B cell (primary cell): ENCODE measurements at regions of chr17 and their contacts with region 1.

Region 1: GRCh38 chr17:32142038-32142856 is at the start of gene RHOT1:
- DNase-seq: peak; percentile 89
- ATAC-seq: peak; percentile 84
- H3K4me3 ChIP-seq: peak within 1 kb of the TSS; percentile 68 to 97 (median 78)
- H3K4me3 Mint-ChIP-seq: peak within 1 kb of the TSS; percentile 96
- H3K27ac ChIP-seq: peak within 1 kb of the TSS; percentile 58 to 77
- H3K27ac Mint-ChIP-seq: peak within 1 kb of the TSS; percentile 88
- H3K4me1 ChIP-seq: peaks cover 17 to 34% of the 10 kb centered on the region in 2 donors
- H3K4me1 Mint-ChIP-seq: peaks cover 27% of the 10 kb centered on the region
- H3K27me3 ChIP-seq: no peaks in the 10 kb centered on the region
- H3K27me3 Mint-ChIP-seq: no peaks in the 10 kb centered on the region
- CTCF ChIP-seq: peak; percentile 56
- total RNA-seq, gene RHOT1: 24.6 and 27.9 TPM in 2 replicates

Region 2: DNA sequence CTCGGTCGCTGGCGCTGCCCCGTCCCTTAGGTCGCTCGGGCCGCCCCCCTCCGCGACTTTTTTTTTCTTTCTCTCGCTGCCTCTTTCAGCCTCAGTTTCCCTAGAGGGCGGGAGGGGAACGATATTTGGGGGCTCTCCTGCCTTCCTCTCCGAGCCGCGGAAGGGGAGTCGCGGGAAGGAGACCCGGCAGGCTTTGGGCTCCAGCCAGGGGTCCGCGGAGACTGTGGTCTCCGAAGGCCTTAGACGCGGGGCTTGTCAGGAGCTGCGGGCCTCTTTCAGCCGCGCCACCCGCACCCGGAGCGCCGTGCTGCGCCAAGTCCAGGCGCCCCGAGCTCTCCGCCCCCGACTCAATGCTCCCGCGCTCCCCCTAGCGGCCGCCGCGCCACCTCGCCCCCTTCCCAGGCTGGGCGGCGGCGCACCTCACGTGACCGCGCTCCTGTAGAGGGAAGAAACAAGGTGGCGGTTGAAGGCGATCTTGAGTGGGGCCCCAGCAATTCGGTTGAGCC is 135.2 kb before region 1 on chr17 and contains the start of gene LRRC37B:
- CTCF ChIA-PET with region 1: interaction called, 41 read pairs
- POLR2A ChIA-PET with region 1: interaction called, 5 read pairs
- intact Hi-C with region 1: loop called (anchors 1 kb)
- DNase-seq: peak; percentile 91
- ATAC-seq: peak; percentile 94
- H3K4me3 ChIP-seq: peak within 1 kb of the TSS; percentile 66 to 88 (median 78)
- H3K4me3 Mint-ChIP-seq: peak within 1 kb of the TSS; percentile 88
- H3K27ac ChIP-seq: peak within 1 kb of the TSS; percentile 6 to 59
- H3K27ac Mint-ChIP-seq: peak within 1 kb of the TSS; percentile 86
- H3K4me1 ChIP-seq: peaks cover 10 to 14% of the 10 kb centered on the region in 2 donors
- H3K4me1 Mint-ChIP-seq: peaks cover 34% of the 10 kb centered on the region
- H3K27me3 ChIP-seq: no peaks in the 10 kb centered on the region
- H3K27me3 Mint-ChIP-seq: no peaks in the 10 kb centered on the region
- CTCF ChIP-seq: peak; percentile 87
- total RNA-seq, gene LRRC37B: 40.6 and 46.7 TPM in 2 replicates

Region 3: GRCh38 chr17:32127158-32127897 is 14.9 kb before region 1 on chr17:
- CTCF ChIA-PET with region 1: interaction called, 65 read pairs
- POLR2A ChIA-PET with region 1: no interaction called
- intact Hi-C with region 1: loop called (anchors 1 kb)
- DNase-seq: peak; percentile 79
- ATAC-seq: peak; percentile 96
- H3K4me3 ChIP-seq: peak overlapping the region; percentile 68 to 77 (median 70)
- H3K4me3 Mint-ChIP-seq: peak overlapping the region; percentile 90
- H3K27ac ChIP-seq: peak overlapping the region; percentile 54 to 74
- H3K27ac Mint-ChIP-seq: peak overlapping the region; percentile 90
- H3K4me1 ChIP-seq: peaks cover 14 to 18% of the 10 kb centered on the region in 2 donors
- H3K4me1 Mint-ChIP-seq: peaks cover 20% of the 10 kb centered on the region
- H3K27me3 ChIP-seq: no peaks in the 10 kb centered on the region
- H3K27me3 Mint-ChIP-seq: no peaks in the 10 kb centered on the region
- CTCF ChIP-seq: no peak